K562 (cell line): ENCODE measurements at regions of chr1 and their contacts with region 1.

Region 1: DNA sequence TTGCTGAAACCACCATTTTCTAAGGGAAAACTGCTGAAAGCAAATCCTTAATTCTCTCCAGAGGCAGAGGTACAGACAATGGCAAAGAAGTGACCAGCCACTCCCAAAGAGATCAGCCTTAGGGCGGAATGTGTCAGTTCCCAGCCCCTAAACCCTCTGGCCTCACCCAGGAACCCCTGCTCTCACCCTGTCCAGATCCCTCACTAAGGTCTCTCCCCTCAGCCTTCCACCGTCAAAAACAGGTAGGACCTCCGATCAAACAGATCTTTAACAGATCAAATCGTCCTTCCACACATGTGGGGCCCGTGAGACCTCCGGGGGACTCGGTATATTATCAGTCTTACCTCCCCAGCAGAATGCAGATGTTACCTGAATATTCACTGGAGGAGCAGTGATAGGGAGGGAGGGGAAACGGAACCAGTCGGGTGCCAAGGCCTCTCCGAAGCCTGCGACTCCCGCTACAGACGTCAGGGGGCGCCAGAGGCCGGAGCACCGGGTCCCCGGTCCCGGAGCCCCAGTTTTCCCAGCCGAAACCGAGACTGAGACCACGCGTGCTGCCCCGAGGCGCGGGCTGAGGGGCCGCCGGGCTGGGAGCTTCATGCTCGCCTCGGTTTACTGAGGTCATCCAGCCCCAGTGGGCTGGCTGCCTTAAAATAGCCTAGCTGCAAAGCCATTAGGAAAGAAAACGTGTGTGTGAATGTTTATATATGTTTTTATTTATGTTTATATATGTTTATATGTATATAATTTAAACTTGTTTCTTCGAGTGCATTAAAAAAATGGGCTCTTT is 23.6 kb downstream of the GPA33 start:
- DNase-seq: peak; percentile 87 to 97 (median 94)
- ATAC-seq: peak; percentile 94
- H3K4me3 ChIP-seq: no peak overlapping the region
- H3K27ac ChIP-seq: no peak overlapping the region
- H3K4me1 ChIP-seq: peaks cover 0 to 9% of the 10 kb centered on the region in 2 experiments; a peak in 3 of 5 replicates
- H3K27me3 ChIP-seq: peaks cover 41 to 45% of the 10 kb centered on the region in 2 experiments
- CTCF ChIP-seq: peak; percentile 94 to 98 (median 97)
- EP300 ChIP-seq: no peak
- POLR2A ChIP-seq: no peak
- RAD21 ChIP-seq: peak; percentile 98

Region 2: GRCh38 chr1:166975361-166976129 is 91.0 kb before region 1 on chr1 and contains the start of gene ILDR2:
- CTCF ChIA-PET with region 1: no interaction called
- POLR2A ChIA-PET with region 1: no interaction called
- in situ Hi-C with region 1: no loop called
- intact Hi-C with region 1: no loop called
- DNase-seq: peak; percentile 49 to 78 (median 74)
- ATAC-seq: peak; percentile 92
- H3K4me3 ChIP-seq: peak within 1 kb of the TSS; percentile 56
- H3K27ac ChIP-seq: no peak within 1 kb of the TSS
- H3K4me1 ChIP-seq: peaks cover 3 to 13% of the 10 kb centered on the region in 2 experiments; a peak in 3 of 5 replicates
- H3K27me3 ChIP-seq: peaks cover 35 to 36% of the 10 kb centered on the region in 2 experiments
- CTCF ChIP-seq: peak in 2 of 3 experiments; percentile 19 to 40; a peak in 2 of 6 replicates
- EP300 ChIP-seq: no peak
- POLR2A ChIP-seq: no peak
- RAD21 ChIP-seq: peak in 1 of 2 experiments; percentile 47; a peak in 2 of 4 replicates
- polyA plus RNA-seq, gene ILDR2: not detected

Region 3: DNA sequence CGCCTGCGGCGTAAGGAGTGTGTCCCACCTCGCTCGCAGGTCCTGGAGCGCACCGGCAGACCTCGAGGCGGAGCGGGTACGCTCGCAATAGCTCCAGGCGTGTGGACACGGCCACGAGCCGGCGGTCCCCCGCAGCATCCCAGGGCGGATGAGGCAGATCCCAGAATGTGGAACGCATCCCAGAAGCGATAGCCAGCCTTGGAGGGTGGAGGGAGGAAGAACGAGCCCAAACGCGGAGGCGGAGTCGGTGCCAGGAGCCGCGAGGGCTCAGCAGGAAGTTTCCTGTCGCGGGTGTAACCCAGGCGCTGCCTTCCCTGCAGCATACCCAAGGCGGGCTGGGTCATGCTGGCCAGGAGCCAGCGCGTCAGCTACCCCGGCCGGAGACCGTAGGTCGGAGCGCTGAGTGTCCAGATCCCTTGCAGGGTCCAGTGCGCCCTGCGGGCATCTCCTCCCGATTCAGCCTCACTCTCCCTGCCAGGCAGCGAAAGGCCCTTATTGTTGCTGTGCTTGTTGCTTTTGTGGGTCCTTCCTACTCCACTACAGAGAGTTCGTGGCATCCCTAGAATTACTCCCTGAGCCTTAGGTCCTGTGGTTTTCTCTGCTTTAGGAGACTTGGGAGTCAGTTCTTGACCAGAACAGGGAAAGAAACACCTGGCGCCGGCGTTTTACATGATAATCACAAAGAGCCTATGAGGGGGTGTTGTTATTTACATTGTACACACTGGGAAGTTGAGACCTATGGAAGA is 55.0 kb after region 1 on chr1:
- CTCF ChIA-PET with region 1: interaction called, 11 read pairs
- POLR2A ChIA-PET with region 1: no interaction called
- in situ Hi-C with region 1: no loop called
- intact Hi-C with region 1: loop called (anchors 1 kb)
- DNase-seq: no peak
- ATAC-seq: peak; percentile 20
- H3K4me3 ChIP-seq: no peak overlapping the region
- H3K27ac ChIP-seq: no peak overlapping the region
- H3K4me1 ChIP-seq: peaks cover 0 to 16% of the 10 kb centered on the region in 2 experiments; a peak in 3 of 5 replicates
- H3K27me3 ChIP-seq: peaks cover 50 to 78% of the 10 kb centered on the region in 2 experiments
- CTCF ChIP-seq: no peak
- EP300 ChIP-seq: no peak
- POLR2A ChIP-seq: no peak
- RAD21 ChIP-seq: no peak

Region 4: GRCh38 chr1:167273027-167273800 is 206.7 kb after region 1 on chr1:
- CTCF ChIA-PET with region 1: no interaction called
- POLR2A ChIA-PET with region 1: no interaction called
- in situ Hi-C with region 1: no loop called
- intact Hi-C with region 1: loop called (anchors 5 kb)
- DNase-seq: no peak
- ATAC-seq: peak; percentile 62
- H3K4me3 ChIP-seq: no peak overlapping the region
- H3K27ac ChIP-seq: no peak overlapping the region
- H3K4me1 ChIP-seq: peaks cover 4% of the 10 kb centered on the region in 2 experiments; a peak in 1 of 5 replicates
- H3K27me3 ChIP-seq: no peaks in the 10 kb centered on the region
- CTCF ChIP-seq: no peak
- EP300 ChIP-seq: no peak
- POLR2A ChIP-seq: no peak
- RAD21 ChIP-seq: no peak

Region 5: DNA sequence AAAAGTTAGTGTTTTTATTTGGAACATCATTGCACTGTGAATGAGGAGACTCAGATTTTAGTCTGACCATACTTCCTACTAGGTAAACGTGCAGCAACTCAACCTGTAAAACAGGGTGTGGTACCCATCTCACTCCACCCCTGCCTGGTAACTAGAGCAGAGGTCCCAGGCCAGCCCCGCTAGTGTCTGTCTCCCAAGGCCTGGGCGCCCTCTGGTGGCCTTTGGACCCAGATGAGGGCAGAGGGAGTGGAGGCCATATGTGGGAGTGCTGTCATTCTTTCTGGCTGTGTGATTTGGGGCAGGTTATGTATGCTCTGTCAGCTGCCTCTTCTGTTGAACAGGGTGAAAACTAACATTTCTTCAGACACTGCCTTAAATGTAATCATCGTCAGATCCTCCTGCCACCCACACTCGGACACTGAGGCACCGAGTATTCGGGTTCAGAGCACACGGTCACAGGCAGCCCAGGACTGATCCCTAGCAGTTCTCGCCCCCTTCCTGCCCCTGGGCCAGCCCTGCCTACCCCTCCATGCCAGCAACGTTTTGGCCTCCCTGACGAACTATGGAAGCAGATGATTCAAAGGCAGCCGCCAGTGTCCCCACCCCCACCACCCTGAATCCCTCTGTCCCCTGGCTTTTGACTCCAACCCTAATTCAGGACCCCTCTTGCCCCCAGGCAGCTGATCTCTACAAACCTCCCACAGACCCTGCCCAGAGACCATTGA is 375.8 kb after region 1 on chr1:
- CTCF ChIA-PET with region 1: interaction called, 22 read pairs
- POLR2A ChIA-PET with region 1: no interaction called
- in situ Hi-C with region 1: loop called (anchors 5 kb)
- intact Hi-C with region 1: loop called (anchors 1 kb)
- DNase-seq: peak; percentile 91 to 94 (median 92)
- ATAC-seq: peak; percentile 98
- H3K4me3 ChIP-seq: no peak overlapping the region
- H3K27ac ChIP-seq: no peak overlapping the region
- H3K4me1 ChIP-seq: peaks cover 2 to 13% of the 10 kb centered on the region in 2 experiments; a peak in 3 of 5 replicates
- H3K27me3 ChIP-seq: peaks cover 10 to 37% of the 10 kb centered on the region in 2 experiments
- CTCF ChIP-seq: peak; percentile 96 to 98 (median 97)
- EP300 ChIP-seq: no peak
- POLR2A ChIP-seq: no peak
- RAD21 ChIP-seq: peak; percentile 99 to 100

Region 6: GRCh38 chr1:167533851-167534300 is 467.3 kb after region 1 on chr1:
- CTCF ChIA-PET with region 1: interaction called, 8 read pairs
- POLR2A ChIA-PET with region 1: interaction called, 3 read pairs
- in situ Hi-C with region 1: loop called (anchors 5 kb)
- intact Hi-C with region 1: loop called (anchors 2 kb)
- DNase-seq: peak; percentile 86 to 88 (median 87)
- ATAC-seq: peak; percentile 94
- H3K4me3 ChIP-seq: no peak overlapping the region
- H3K27ac ChIP-seq: no peak overlapping the region
- H3K4me1 ChIP-seq: no peaks in the 10 kb centered on the region; a peak in 2 of 5 replicates
- H3K27me3 ChIP-seq: peaks cover 0 to 8% of the 10 kb centered on the region in 2 experiments; a peak in 1 of 5 replicates
- CTCF ChIP-seq: peak; percentile 88 to 97 (median 96)
- EP300 ChIP-seq: no peak
- POLR2A ChIP-seq: no peak
- RAD21 ChIP-seq: peak; percentile 92 to 95